Psoas muscle (tissue), 8 donors: ENCODE measurements at regions of chrX and their contacts with region 1.

Region 1: GRCh38 chrX:19904778-19905367 is 17.5 kb upstream of the SH3KBP1 start:
- DNase-seq: no peak
- ATAC-seq: peak; percentile 61 to 82 (median 70)
- H3K4me3 ChIP-seq: no peak overlapping the region
- H3K27ac ChIP-seq: no peak overlapping the region
- H3K4me1 ChIP-seq: no peaks in the 10 kb centered on the region
- H3K27me3 ChIP-seq: no peaks in the 10 kb centered on the region
- CTCF ChIP-seq: peak; percentile 60

Region 2: GRCh38 chrX:19990556-19991349 is 85.9 kb after region 1 on chrX and contains the start of gene BCLAF3:
- intact Hi-C with region 1: loop called in 1 of 2 experiments (anchors 5 kb)
- DNase-seq: peak; percentile 90 to 95
- ATAC-seq: peak; percentile 95 to 99 (median 96)
- H3K4me3 ChIP-seq: peak within 1 kb of the TSS; percentile 87
- H3K27ac ChIP-seq: peak within 1 kb of the TSS; percentile 83
- H3K4me1 ChIP-seq: no peaks in the 10 kb centered on the region
- H3K27me3 ChIP-seq: peaks cover 0 to 8% (median 0%) of the 10 kb centered on the region in 3 donors
- CTCF ChIP-seq: peak; percentile 75
- total RNA-seq, gene BCLAF3: 6.2 to 8.2 (median 7.0) TPM

Region 3: GRCh38 chrX:20066968-20067708 is 162.3 kb after region 1 on chrX:
- intact Hi-C with region 1: loop called in 1 of 2 experiments (anchors 5 kb)
- DNase-seq: no peak
- ATAC-seq: peak in 3 of 4 donors; percentile 48 to 71 (median 65)
- H3K4me3 ChIP-seq: no peak overlapping the region
- H3K27ac ChIP-seq: no peak overlapping the region
- H3K4me1 ChIP-seq: no peaks in the 10 kb centered on the region
- H3K27me3 ChIP-seq: peaks cover 0 to 1% (median 0%) of the 10 kb centered on the region in 3 donors
- CTCF ChIP-seq: peak; percentile 40

Region 4: DNA sequence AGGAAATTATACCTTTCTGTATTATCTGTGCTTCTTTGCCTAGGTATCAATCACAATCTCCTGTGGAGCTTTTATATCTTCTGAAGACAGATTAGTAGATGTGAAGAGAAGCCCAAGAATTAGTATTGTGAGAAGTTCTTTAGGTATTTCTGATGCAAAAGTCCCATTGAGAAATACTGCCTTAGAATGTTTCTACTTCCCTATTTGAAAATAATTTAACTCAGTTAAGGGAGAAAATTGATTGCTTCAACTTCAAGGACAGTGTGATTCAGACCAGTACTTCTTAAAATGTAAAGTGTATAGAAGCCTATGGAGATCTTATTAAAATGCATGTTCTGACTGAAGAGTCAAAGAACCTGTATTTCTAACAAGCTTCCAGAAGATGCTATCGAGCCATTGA is 227.8 kb after region 1 on chrX:
- intact Hi-C with region 1: loop called in 1 of 2 experiments (anchors 5 kb)
- DNase-seq: no peak
- ATAC-seq: no peak
- H3K4me3 ChIP-seq: no peak overlapping the region
- H3K27ac ChIP-seq: no peak overlapping the region
- H3K4me1 ChIP-seq: peaks cover 4% of the 10 kb centered on the region
- H3K27me3 ChIP-seq: no peaks in the 10 kb centered on the region
- CTCF ChIP-seq: no peak